ENCODE measurements at regions of chr13 and their contacts with region 1.

Region 1: DNA sequence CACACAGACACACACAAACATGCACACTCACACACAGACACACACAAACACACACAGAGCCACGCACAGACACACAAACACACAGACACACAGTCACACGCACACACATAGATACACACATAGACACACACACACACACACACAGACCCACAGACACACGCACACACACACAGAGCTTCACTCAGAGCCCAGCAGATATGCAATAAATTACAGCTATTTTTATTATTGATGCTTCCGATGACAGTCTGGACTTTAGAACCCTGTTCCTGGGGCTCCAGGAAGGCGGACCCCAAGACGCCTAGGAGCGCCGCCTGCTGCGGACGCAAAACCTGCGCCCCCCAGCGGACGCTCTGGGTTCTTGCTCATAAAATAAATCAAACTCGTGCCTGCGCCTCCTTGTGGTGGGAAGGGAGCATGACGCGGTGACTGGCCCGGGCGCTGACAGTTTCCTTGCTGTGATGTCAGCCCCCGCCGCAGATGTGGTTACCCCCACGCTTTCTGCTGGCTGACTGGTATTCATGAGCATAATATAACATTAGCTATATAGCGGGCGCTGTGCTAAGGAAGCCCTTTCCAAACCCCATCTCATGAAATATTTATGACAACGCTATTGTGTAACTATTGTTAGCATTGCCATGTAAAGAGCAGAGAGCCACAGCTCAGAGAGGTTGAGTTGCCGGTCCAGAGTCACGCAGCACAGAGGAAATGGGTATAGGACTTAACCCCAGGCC is 64.4 kb upstream of the TM9SF2 start:
- DNase-seq: no peak
- H3K4me3 ChIP-seq: no peak overlapping the region
- H3K27ac ChIP-seq: no peak overlapping the region
- H3K4me1 ChIP-seq: peaks cover 20% of the 10 kb centered on the region
- H3K27me3 ChIP-seq: no peaks in the 10 kb centered on the region
- CTCF ChIP-seq: peak; percentile 99 to 100 (median 100)
- POLR2A ChIP-seq: no peak

Region 2: GRCh38 chr13:98697791-98698190 is 739.1 kb before region 1 on chr13:
- intact Hi-C with region 1: no loop called
- DNase-seq: no peak
- H3K4me3 ChIP-seq: no peak overlapping the region
- H3K27ac ChIP-seq: no peak overlapping the region
- H3K4me1 ChIP-seq: no peaks in the 10 kb centered on the region
- H3K27me3 ChIP-seq: no peaks in the 10 kb centered on the region
- CTCF ChIP-seq: no peak
- POLR2A ChIP-seq: no peak

Region 3: GRCh38 chr13:98890186-98890585 is 546.7 kb before region 1 on chr13:
- intact Hi-C with region 1: no loop called
- DNase-seq: no peak
- H3K4me3 ChIP-seq: no peak overlapping the region
- H3K27ac ChIP-seq: no peak overlapping the region
- H3K4me1 ChIP-seq: peaks cover 17% of the 10 kb centered on the region
- H3K27me3 ChIP-seq: no peaks in the 10 kb centered on the region
- CTCF ChIP-seq: no peak
- POLR2A ChIP-seq: no peak

Region 4: DNA sequence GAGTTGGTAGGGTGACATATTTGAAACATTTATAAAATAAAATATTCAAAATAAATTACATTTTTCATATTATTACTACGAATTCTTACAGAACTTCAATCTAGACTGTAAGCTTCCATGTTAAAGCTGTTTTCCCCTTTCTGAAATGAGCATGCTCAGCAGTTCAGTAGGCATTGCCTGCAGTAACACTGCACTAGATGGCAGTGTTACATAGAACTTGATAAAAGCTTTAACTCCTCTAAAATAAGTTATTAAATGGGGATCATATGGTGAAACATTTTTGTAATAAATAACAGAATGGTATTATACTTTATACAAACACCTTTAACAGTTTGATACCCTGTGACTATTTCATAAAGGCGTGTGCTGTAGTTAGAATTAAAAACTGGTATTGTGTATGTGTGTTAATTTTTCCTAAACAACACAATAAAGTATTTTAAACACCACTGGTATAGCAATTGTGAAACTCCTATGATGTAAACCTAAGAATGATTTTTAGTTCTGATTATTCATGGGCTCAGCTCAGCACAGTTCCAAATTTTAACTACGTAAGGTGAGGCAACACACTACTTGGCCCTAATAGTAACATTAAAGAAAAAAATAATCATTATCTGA is 167.1 kb before region 1 on chr13:
- intact Hi-C with region 1: loop called (anchors 5 kb)
- DNase-seq: no peak
- H3K4me3 ChIP-seq: no peak overlapping the region
- H3K27ac ChIP-seq: no peak overlapping the region
- H3K4me1 ChIP-seq: no peaks in the 10 kb centered on the region
- H3K27me3 ChIP-seq: no peaks in the 10 kb centered on the region
- CTCF ChIP-seq: peak in 1 of 3 experiments; percentile 60
- POLR2A ChIP-seq: no peak

Region 5: DNA sequence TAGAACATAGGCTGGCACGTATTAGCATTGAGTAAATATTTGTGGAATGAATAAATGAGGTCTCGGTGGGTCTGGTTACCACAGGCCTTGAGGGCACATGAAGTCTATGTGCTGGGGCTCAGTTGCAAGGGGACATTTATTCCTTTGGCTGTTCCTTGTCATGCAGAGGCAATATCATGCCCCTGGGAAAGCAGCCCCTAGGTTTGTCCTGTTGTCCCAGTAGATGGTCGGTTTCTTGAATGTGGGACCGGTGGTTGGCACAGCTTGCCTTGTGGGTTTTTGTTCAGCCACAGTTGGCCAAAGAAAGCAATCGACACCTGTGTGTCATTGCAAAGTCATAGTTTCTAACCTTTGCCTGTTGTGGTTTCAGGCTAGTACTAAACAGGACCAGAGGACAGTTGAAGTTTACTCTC is 105.0 kb before region 1 on chr13:
- intact Hi-C with region 1: no loop called
- DNase-seq: no peak
- H3K4me3 ChIP-seq: no peak overlapping the region
- H3K27ac ChIP-seq: no peak overlapping the region
- H3K4me1 ChIP-seq: no peaks in the 10 kb centered on the region
- H3K27me3 ChIP-seq: no peaks in the 10 kb centered on the region
- CTCF ChIP-seq: no peak
- POLR2A ChIP-seq: no peak

Region 6: GRCh38 chr13:100773923-100774663 is 1337.2 kb after region 1 on chr13:
- intact Hi-C with region 1: no loop called
- DNase-seq: no peak
- H3K4me3 ChIP-seq: no peak overlapping the region
- H3K27ac ChIP-seq: no peak overlapping the region
- H3K4me1 ChIP-seq: no peaks in the 10 kb centered on the region
- H3K27me3 ChIP-seq: no peaks in the 10 kb centered on the region
- CTCF ChIP-seq: no peak
- POLR2A ChIP-seq: no peak